ENCODE measurements at regions of chr1 and their contacts with region 1.

Region 1: GRCh38 chr1:39653546-39654031 is 14.1 kb upstream of the HEYL start:
- DNase-seq: peak; percentile 23
- ATAC-seq: peak; percentile 82
- H3K4me3 ChIP-seq: no peak overlapping the region
- H3K27ac ChIP-seq: no peak overlapping the region
- H3K4me1 ChIP-seq: peaks cover 3% of the 10 kb centered on the region; the same call in 1 of the 2 replicates
- H3K27me3 ChIP-seq: no peaks in the 10 kb centered on the region; a peak in 1 of 4 replicates
- CTCF ChIP-seq: peak; percentile 87 to 91 (median 91)
- EP300 ChIP-seq: no peak
- POLR2A ChIP-seq: no peak
- RAD21 ChIP-seq: peak; percentile 82

Region 2: GRCh38 chr1:39575191-39576015 is 78.2 kb before region 1 on chr1:
- CTCF ChIA-PET with region 1: interaction called, 10 read pairs
- POLR2A ChIA-PET with region 1: no interaction called
- RAD21 ChIA-PET with region 1: no interaction called
- SMC1A ChIA-PET with region 1: interaction called, 3 read pairs
- in situ Hi-C with region 1: no loop called
- intact Hi-C with region 1: no loop called
- DNase-seq: no peak
- ATAC-seq: peak; percentile 67
- H3K4me3 ChIP-seq: peak overlapping the region; percentile 92
- H3K27ac ChIP-seq: peak overlapping the region; percentile 79
- H3K4me1 ChIP-seq: peaks cover 8% of the 10 kb centered on the region; the same call in 1 of the 2 replicates
- H3K27me3 ChIP-seq: no peaks in the 10 kb centered on the region
- CTCF ChIP-seq: no peak
- EP300 ChIP-seq: no peak
- POLR2A ChIP-seq: peak; percentile 58; the same call in 1 of the 2 replicates
- RAD21 ChIP-seq: no peak

Region 3: GRCh38 chr1:39631361-39632322 is 21.9 kb before region 1 on chr1:
- CTCF ChIA-PET with region 1: interaction called, 14 read pairs
- POLR2A ChIA-PET with region 1: no interaction called
- RAD21 ChIA-PET with region 1: no interaction called
- SMC1A ChIA-PET with region 1: no interaction called
- in situ Hi-C with region 1: no loop called
- intact Hi-C with region 1: no loop called
- DNase-seq: no peak
- ATAC-seq: no peak
- H3K4me3 ChIP-seq: no peak overlapping the region
- H3K27ac ChIP-seq: no peak overlapping the region
- H3K4me1 ChIP-seq: peaks cover 3% of the 10 kb centered on the region; the same call in 1 of the 2 replicates
- H3K27me3 ChIP-seq: peaks cover 0 to 3% of the 10 kb centered on the region in 2 experiments; a peak in 1 of 4 replicates
- CTCF ChIP-seq: no peak
- EP300 ChIP-seq: no peak
- POLR2A ChIP-seq: no peak
- RAD21 ChIP-seq: no peak

Region 4: DNA sequence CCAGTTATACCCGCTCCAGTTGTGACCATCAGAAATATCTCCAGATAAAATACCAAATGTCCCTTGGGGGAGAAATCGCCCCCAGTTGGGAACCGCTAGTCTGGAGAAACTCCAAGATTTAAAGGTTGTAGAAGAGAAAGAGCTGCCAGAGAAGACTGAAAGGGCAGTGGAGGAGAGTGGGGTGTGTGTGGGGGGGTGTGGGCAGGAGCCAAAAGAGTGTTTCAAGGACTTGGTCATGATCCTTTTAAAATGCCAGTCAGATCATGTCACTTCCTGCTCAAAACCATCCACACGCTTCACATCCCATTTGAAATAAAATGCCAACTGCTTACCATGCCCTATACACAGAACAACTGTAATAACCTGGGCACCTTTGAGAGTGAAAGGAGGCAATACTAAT is 10.8 kb before region 1 on chr1:
- CTCF ChIA-PET with region 1: interaction called, 24 read pairs
- POLR2A ChIA-PET with region 1: no interaction called
- RAD21 ChIA-PET with region 1: interaction called, 5 read pairs
- SMC1A ChIA-PET with region 1: interaction called, 3 read pairs
- in situ Hi-C with region 1: no loop called
- intact Hi-C with region 1: no loop called
- DNase-seq: no peak
- ATAC-seq: no peak
- H3K4me3 ChIP-seq: no peak overlapping the region
- H3K27ac ChIP-seq: no peak overlapping the region
- H3K4me1 ChIP-seq: no peaks in the 10 kb centered on the region
- H3K27me3 ChIP-seq: peaks cover 2 to 17% of the 10 kb centered on the region in 2 experiments; a peak in 3 of 4 replicates
- CTCF ChIP-seq: no peak
- EP300 ChIP-seq: no peak
- POLR2A ChIP-seq: no peak
- RAD21 ChIP-seq: no peak

Region 5: GRCh38 chr1:39720094-39720999 is 66.8 kb after region 1 on chr1:
- CTCF ChIA-PET with region 1: interaction called, 9 read pairs
- POLR2A ChIA-PET with region 1: no interaction called
- RAD21 ChIA-PET with region 1: interaction called, 3 read pairs
- SMC1A ChIA-PET with region 1: interaction called, 6 read pairs
- in situ Hi-C with region 1: no loop called
- intact Hi-C with region 1: loop called (anchors 5 kb)
- DNase-seq: no peak
- ATAC-seq: peak; percentile 76
- H3K4me3 ChIP-seq: no peak overlapping the region
- H3K27ac ChIP-seq: no peak overlapping the region
- H3K4me1 ChIP-seq: no peaks in the 10 kb centered on the region
- H3K27me3 ChIP-seq: no peaks in the 10 kb centered on the region
- CTCF ChIP-seq: peak; percentile 34 to 74 (median 59)
- EP300 ChIP-seq: no peak
- POLR2A ChIP-seq: no peak
- RAD21 ChIP-seq: peak; percentile 87

Measured in GM12878 (cell line).